Thyroid gland (tissue), 4 donors: ENCODE measurements at regions of chr16 and their contacts with region 1.

Region 1: GRCh38 chr16:77437859-77438258 is 3.0 kb upstream of the ADAMTS18 start:
- DNase-seq: no peak
- H3K4me3 ChIP-seq: no peak overlapping the region
- H3K27ac ChIP-seq: no peak overlapping the region
- H3K4me1 ChIP-seq: peaks cover 0 to 12% of the 10 kb centered on the region in 2 donors
- H3K27me3 ChIP-seq: no peaks in the 10 kb centered on the region
- CTCF ChIP-seq: peak in 1 of 6 experiments; percentile 22
- POLR2A ChIP-seq: no peak

Region 2: DNA sequence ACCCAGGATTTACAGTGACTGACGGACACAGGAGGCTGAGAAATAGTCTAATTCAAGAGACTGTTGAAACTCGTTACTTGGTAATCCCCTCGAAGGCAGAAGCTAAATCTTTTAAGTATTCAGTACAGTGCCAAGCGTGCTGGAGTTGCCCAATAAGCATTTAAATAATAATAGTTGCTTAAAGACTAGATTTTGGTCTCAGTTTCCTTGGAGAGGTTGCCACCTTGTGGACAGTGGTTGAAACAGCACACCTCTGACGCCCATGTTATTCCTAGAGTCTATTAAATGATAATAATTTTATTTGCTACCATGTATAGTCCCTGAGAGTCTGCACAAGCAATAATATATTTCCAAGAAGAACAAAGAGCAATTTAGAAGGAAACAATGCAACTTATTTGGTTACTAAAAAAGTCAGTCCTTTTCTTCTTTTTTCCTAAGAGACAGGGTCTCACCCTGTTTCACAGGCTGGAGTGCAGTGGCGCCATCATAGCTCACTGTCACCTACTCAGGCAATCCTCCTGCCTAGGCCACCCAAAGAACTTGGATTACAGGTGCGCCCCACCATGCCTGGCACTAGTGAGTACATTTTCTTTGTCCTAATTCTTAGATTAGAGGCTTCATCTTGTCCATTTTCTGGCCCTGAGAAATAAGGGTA is 146.5 kb after region 1 on chr16:
- intact Hi-C with region 1: loop called (anchors 10 kb)
- DNase-seq: peak; percentile 48 to 53
- H3K4me3 ChIP-seq: no peak overlapping the region
- H3K27ac ChIP-seq: no peak overlapping the region
- H3K4me1 ChIP-seq: peaks cover 11 to 12% of the 10 kb centered on the region in 2 donors
- H3K27me3 ChIP-seq: no peaks in the 10 kb centered on the region
- CTCF ChIP-seq: peak; percentile 50 to 98 (median 88)
- POLR2A ChIP-seq: no peak